CD4-positive, alpha-beta T cell (primary cell): ENCODE measurements at regions of chr11 and their contacts with region 1.

Region 1: GRCh38 chr11:95977534-95978174 is 53.7 kb upstream of the MTMR2 start:
- DNase-seq: no peak
- ATAC-seq: no peak
- H3K4me3 ChIP-seq: no peak overlapping the region
- H3K4me3 Mint-ChIP-seq: no peak overlapping the region
- H3K27ac ChIP-seq: no peak overlapping the region
- H3K27ac Mint-ChIP-seq: no peak overlapping the region
- H3K4me1 ChIP-seq: no peaks in the 10 kb centered on the region
- H3K4me1 Mint-ChIP-seq: no peaks in the 10 kb centered on the region
- H3K27me3 ChIP-seq: no peaks in the 10 kb centered on the region
- H3K27me3 Mint-ChIP-seq: no peaks in the 10 kb centered on the region
- CTCF ChIP-seq: no peak

Region 2: GRCh38 chr11:95923728-95924413 is 53.8 kb before region 1 on chr11 and contains the start of gene MTMR2:
- CTCF ChIA-PET with region 1: no interaction called
- POLR2A ChIA-PET with region 1: no interaction called
- intact Hi-C with region 1: loop called in 1 of 2 experiments (anchors 2 kb)
- DNase-seq: peak; percentile 1 to 66 (median 28)
- ATAC-seq: peak; percentile 68
- H3K4me3 ChIP-seq: peak within 1 kb of the TSS; percentile 98
- H3K4me3 Mint-ChIP-seq: peak within 1 kb of the TSS; percentile 95
- H3K27ac ChIP-seq: peak within 1 kb of the TSS; percentile 27 to 77
- H3K27ac Mint-ChIP-seq: peak within 1 kb of the TSS; percentile 74
- H3K4me1 ChIP-seq: peaks cover 9% of the 10 kb centered on the region
- H3K4me1 Mint-ChIP-seq: peaks cover 33% of the 10 kb centered on the region
- H3K27me3 ChIP-seq: no peaks in the 10 kb centered on the region
- H3K27me3 Mint-ChIP-seq: peaks cover 9% of the 10 kb centered on the region
- CTCF ChIP-seq: no peak
- total RNA-seq, gene MTMR2: 6.6 to 6.9 TPM